AG04449 (cell line): ENCODE measurements at regions of chr22 and their contacts with region 1.

Region 1: GRCh38 chr22:38872172-38872830 is at the start of gene CBX6:
- DNase-seq: no peak
- H3K4me3 ChIP-seq: peak within 1 kb of the TSS; percentile 75
- CTCF ChIP-seq: no peak

Region 2: DNA sequence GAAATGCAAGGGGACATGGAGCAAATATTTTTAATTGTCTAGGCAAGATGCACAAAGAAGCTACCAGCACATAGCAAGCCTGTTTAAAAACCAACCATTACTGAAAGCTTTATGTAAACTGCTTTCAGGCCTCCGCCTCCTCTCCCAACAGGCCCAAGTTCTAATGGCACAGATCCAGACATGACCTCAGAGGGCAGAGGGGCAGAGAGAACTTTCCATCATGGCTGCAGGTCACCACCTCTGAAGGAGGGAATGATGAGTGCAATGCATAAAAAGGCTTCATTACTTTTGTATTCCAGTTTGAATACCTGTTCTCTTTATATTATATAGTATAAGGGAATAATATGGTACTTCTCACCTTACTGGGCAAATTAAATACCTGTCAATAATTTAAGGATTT is 381.4 kb before region 1 on chr22:
- CTCF ChIA-PET with region 1: no interaction called
- POLR2A ChIA-PET with region 1: no interaction called
- DNase-seq: no peak
- H3K4me3 ChIP-seq: no peak overlapping the region
- CTCF ChIP-seq: no peak

Region 3: GRCh38 chr22:38835888-38836301 is 36.4 kb before region 1 on chr22:
- CTCF ChIA-PET with region 1: interaction called, 12 read pairs
- POLR2A ChIA-PET with region 1: no interaction called
- DNase-seq: no peak
- H3K4me3 ChIP-seq: no peak overlapping the region
- CTCF ChIP-seq: no peak

Region 4: GRCh38 chr22:38973289-38974169 is 101.2 kb after region 1 on chr22:
- CTCF ChIA-PET with region 1: interaction called, 22 read pairs
- POLR2A ChIA-PET with region 1: no interaction called
- DNase-seq: no peak
- H3K4me3 ChIP-seq: no peak overlapping the region
- CTCF ChIP-seq: peak; percentile 75

Region 5: GRCh38 chr22:39003165-39003638 is 130.9 kb after region 1 on chr22:
- CTCF ChIA-PET with region 1: interaction called, 238 read pairs
- POLR2A ChIA-PET with region 1: no interaction called
- DNase-seq: peak; percentile 26
- H3K4me3 ChIP-seq: no peak overlapping the region
- CTCF ChIP-seq: peak; percentile 74

Region 6: GRCh38 chr22:39123751-39124601 is 251.7 kb after region 1 on chr22:
- CTCF ChIA-PET with region 1: interaction called, 32 read pairs
- POLR2A ChIA-PET with region 1: no interaction called
- DNase-seq: no peak
- H3K4me3 ChIP-seq: no peak overlapping the region
- CTCF ChIP-seq: no peak